K562 (cell line): ENCODE measurements at regions of chr16 and their contacts with region 1.

Region 1: DNA sequence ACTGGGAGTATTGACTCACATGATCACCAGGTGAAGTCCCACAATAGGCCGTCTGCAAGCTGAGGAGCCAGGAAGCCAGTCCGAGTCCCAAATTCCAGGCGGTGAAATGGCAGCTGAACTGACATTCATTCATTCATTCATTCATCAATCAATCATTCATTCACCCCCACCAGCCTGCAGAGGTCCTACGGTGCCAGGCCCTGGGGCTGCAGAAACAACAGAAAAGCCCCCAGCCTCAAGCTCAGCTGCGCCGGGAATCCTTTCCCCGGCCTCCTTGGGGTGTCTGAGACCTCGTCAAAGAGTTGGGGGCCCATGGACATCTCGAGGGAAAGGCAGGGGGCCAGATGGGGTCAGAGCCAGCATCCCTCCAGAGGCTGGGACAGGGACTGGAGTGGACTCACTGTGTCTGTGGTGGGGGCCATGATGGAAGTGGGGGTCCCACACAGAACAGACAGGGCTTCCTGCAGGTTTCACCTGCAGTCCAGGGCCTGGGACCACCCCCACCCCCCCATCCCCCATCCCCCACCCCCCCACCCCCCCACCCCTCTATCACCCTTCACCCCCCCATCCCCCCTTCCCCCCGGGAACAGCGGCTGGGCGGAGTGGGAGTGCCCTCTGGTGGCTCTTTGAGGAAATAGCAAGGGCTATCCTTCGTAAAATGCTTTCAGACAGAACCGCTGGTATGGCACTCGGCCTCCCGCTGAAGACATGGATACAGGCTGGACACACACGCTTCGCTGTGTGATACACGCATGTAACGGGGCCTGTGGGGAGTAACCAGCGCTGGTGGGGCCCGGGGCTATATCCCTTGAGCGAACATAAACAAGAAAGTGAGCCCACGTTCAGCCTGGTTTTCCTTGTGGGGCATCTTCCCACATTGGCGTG is 8.5 kb upstream of the ZC3H18 start:
- DNase-seq: peak; percentile 74 to 85 (median 78)
- ATAC-seq: peak; percentile 73
- H3K4me3 ChIP-seq: no peak overlapping the region
- H3K27ac ChIP-seq: no peak overlapping the region
- H3K4me1 ChIP-seq: peaks cover 15 to 37% of the 10 kb centered on the region in 2 experiments; a peak in 4 of 5 replicates
- H3K27me3 ChIP-seq: peaks cover 6 to 17% of the 10 kb centered on the region in 2 experiments; a peak in 2 of 5 replicates
- CTCF ChIP-seq: peak; percentile 77 to 89 (median 83)
- EP300 ChIP-seq: no peak
- POLR2A ChIP-seq: no peak
- RAD21 ChIP-seq: peak; percentile 71 to 86

Region 2: DNA sequence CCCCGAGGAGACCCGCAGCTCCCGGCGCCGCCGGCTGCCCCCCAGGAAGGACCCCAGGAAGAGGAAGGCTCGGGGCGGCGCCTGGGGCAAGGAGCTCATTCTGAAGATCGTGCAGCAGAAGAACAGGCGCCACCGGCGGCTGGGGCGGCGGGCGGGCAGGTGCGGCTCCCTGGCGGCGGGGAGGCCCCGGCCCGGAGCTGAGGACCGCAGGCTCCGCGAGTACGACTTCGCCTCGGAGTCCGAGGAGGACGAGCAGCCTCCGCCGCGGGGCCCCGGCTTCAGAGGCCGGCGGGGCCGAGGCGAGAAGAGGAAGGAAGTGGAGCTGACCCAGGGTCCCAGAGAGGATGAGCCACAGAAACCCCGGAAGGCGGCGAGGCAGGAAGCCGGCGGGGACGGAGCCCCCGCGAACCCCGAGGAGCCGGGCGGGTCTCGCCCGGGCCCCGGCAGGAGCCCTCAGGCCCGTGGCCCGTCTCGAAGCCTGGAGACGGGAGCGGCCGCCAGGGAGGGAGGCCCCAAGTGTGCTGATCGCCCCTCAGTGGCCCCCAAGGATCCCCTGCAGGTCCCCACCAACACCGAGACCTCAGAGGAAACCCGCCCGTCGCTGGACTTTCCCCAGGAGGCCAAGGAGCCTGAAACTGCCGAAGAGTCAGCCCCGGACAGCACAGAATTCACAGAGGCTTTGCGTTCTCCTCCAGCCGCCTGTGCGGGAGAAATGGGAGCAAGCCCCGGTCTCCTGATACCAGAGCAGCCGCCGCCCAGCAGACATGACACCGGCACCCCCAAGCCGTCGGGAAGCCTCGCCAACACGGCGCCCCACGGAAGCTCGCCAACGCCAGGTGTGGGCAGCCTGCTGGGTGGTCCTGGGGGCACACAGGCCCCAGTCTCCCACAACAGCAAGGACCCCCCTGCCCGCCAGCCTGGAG is 130.9 kb before region 1 on chr16:
- CTCF ChIA-PET with region 1: no interaction called
- POLR2A ChIA-PET with region 1: no interaction called
- in situ Hi-C with region 1: no loop called
- intact Hi-C with region 1: no loop called
- DNase-seq: peak; percentile 41 to 52 (median 50)
- ATAC-seq: peak; percentile 60
- H3K4me3 ChIP-seq: peak overlapping the region; percentile 9; the same call in 1 of the 2 replicates
- H3K27ac ChIP-seq: no peak overlapping the region
- H3K4me1 ChIP-seq: peaks cover 0 to 72% of the 10 kb centered on the region in 2 experiments; a peak in 2 of 5 replicates
- H3K27me3 ChIP-seq: peaks cover 39 to 78% of the 10 kb centered on the region in 2 experiments
- CTCF ChIP-seq: no peak
- EP300 ChIP-seq: no peak
- POLR2A ChIP-seq: no peak
- RAD21 ChIP-seq: no peak

Region 3: DNA sequence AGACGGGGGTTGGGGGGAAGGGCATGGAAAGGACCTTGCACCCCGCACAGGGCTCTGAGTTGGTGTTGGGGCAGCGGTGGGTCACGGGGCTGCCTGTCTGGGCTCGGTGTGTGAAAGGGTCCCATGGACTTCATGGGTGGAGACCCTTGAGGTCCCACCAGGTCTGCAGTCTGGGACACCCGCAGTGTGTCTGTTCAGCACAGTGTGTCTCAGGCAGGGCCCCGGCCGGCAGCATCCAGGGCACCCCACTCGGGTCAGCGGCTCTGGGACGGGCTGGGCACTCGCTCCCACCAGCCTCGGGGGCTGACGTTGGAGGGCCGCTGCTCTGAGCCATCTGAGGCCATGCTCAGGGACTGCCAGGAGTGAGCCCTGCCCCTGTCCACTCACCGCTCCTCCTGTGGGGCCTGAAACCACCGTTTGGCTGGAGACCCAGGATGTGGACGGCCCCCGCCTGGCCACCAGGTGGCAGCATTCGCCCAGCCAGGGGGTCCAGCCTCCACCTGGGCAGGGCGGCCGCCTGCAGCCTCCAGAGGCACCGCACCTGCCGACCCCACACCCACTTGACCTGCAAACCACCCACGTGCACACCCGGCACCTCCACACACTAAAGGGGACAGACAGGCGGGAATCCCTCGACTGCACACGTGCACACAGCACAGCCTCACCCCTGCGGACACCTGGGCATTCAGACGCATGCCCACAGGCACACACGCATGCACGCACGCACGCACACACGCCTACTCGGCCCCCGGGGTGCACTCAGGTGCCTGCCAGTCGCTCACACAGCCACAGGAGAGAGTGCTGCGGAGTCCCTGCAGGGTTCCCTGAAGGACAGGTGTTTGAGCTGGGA is 118.8 kb before region 1 on chr16:
- CTCF ChIA-PET with region 1: interaction called, 28 read pairs
- POLR2A ChIA-PET with region 1: no interaction called
- in situ Hi-C with region 1: no loop called
- intact Hi-C with region 1: loop called (anchors 2 kb)
- DNase-seq: peak; percentile 85 to 93 (median 91)
- ATAC-seq: peak; percentile 98
- H3K4me3 ChIP-seq: no peak overlapping the region
- H3K27ac ChIP-seq: no peak overlapping the region
- H3K4me1 ChIP-seq: peaks cover 3 to 86% of the 10 kb centered on the region in 2 experiments; a peak in 4 of 5 replicates
- H3K27me3 ChIP-seq: peaks cover 0 to 19% of the 10 kb centered on the region in 2 experiments; a peak in 2 of 5 replicates
- CTCF ChIP-seq: peak; percentile 91 to 97 (median 95)
- EP300 ChIP-seq: no peak
- POLR2A ChIP-seq: no peak
- RAD21 ChIP-seq: peak; percentile 99 to 100

Region 4: DNA sequence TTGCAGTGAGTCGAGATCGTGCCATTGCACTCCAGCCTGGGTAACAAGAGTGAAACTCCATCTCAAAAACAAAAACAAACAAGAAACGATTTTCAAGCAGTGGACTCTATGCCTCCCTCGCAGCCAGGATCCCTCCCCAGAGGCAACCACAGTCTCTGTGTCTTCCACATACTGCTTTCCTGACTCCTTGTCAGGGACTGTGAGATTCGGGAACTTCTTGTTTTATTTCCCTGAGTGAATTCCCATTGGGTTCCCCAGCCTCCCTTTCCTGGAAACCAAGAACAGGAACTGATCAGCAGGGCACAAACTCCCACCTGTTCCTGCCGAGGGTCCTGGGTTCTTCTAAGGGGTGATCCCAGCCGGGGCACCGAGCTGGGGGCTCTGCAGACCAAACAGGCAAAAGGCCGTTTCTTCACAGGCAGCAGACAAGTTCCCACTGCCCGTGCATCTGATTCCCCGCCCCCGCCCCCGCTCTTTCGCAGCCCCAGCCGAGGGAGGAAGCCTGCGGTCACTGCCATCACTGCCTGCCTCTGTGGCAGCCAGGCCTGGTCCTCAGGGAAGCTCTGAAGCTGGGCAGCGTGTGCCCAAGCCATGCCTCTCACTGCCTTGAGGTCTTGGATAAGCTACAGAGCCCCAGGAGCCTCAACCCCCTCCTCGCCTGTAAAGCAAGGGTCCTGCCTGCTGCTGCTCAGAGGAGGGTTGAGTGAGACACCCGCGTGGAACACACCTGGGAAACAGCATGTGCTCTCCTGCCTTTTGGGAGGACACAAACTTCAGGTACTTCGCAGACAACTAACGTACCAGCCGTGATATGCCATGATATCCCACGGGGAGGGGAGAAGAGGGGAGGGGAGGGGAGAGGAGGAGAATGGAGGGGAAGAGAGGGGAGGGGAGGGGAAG is 228.8 kb after region 1 on chr16:
- CTCF ChIA-PET with region 1: no interaction called
- POLR2A ChIA-PET with region 1: no interaction called
- in situ Hi-C with region 1: no loop called
- intact Hi-C with region 1: no loop called
- DNase-seq: peak; percentile 67 to 81 (median 74)
- ATAC-seq: peak; percentile 82
- H3K4me3 ChIP-seq: peak overlapping the region; percentile 2; the same call in 1 of the 2 replicates
- H3K27ac ChIP-seq: peak overlapping the region; percentile 2; the same call in 2 of the 3 replicates
- H3K4me1 ChIP-seq: peaks cover 14 to 53% of the 10 kb centered on the region in 2 experiments
- H3K27me3 ChIP-seq: no peaks in the 10 kb centered on the region
- CTCF ChIP-seq: no peak
- EP300 ChIP-seq: no peak
- POLR2A ChIP-seq: no peak
- RAD21 ChIP-seq: no peak